ENCODE measurements at regions of chr18 and their contacts with region 1.

Region 1: DNA sequence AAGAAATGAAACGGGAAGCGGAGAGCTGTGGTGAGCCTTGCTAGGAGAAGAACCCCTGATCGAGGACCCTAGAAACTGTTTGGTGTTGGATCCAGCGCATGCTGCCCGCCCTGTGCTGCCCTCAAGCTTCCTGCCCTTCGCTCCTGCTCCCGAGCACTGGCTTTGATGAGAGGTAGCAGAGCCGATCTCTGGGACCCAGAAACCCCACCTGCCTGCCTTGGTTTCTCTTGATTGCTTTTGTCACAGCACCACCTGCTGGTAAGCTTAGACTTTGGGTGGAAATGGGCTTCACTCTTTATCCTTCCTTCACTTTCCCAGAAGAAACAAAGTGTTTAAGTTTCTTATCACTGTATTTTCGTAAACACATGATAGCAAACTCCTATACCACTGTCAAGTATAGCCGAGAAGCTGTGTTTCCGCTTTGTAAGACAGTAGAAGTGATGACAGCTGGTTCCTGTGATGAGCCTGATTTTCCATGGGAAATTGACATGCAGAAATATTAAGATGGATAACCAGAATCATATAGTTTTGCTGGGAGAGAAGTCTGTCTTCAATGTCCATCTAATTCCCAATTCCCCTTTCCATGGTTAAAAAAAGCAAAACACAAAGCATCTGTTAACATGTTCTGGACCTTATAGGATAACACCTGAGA is 267.4 kb downstream of the PHLPP1 start:
- DNase-seq: no peak
- H3K4me3 ChIP-seq: peak overlapping the region; percentile 12; the same call in 1 of the 2 replicates
- CTCF ChIP-seq: peak; percentile 67

Region 2: DNA sequence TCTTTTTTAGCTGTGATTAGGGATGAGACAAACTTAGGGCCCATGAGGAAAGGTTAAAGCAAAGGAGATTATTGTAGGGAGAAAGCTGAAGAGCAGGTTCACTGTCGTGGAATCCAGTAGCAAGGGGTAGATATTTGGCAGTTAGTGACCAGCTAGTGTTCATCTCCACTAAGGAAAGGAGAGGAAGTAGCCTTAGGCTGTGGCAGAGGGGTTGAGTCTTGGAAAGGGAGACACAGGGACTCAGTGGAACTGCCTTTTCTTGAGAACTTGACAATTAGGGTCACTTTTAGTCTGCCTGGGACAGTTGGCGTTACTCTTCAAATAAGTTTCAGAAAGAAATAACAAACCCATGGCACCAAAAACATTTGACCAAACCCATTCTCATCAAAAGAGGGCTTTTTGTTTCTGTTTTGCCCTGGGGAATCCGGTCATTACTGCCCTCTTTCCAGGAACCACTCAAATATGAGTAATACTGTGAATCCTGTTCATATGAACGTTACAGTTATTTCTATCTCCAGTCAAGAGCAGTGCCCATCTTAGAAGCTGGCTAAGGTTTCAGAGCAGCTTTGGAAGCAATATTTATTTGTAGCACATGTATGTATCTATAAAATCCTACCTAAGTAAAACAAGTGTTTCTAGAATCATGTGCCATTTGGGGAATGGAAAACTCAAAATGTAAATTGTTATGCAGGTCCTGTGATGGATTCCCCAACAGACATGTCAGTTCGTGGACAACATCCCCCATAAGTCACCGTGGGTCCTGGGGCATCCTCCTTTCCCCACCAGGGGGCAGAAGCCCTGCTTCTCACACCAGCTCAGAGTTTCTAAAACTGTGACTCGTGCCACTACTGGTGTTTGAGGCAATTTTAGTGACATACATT is 344.7 kb before region 1 on chr18:
- CTCF ChIA-PET with region 1: interaction called, 10 read pairs
- POLR2A ChIA-PET with region 1: no interaction called
- DNase-seq: no peak
- H3K4me3 ChIP-seq: no peak overlapping the region
- CTCF ChIP-seq: peak; percentile 29

Region 3: GRCh38 chr18:62714671-62715435 is 267.9 kb before region 1 on chr18:
- CTCF ChIA-PET with region 1: interaction called, 29 read pairs
- POLR2A ChIA-PET with region 1: no interaction called
- DNase-seq: peak; percentile 99
- H3K4me3 ChIP-seq: peak overlapping the region; percentile 76
- CTCF ChIP-seq: peak; percentile 76

Region 4: DNA sequence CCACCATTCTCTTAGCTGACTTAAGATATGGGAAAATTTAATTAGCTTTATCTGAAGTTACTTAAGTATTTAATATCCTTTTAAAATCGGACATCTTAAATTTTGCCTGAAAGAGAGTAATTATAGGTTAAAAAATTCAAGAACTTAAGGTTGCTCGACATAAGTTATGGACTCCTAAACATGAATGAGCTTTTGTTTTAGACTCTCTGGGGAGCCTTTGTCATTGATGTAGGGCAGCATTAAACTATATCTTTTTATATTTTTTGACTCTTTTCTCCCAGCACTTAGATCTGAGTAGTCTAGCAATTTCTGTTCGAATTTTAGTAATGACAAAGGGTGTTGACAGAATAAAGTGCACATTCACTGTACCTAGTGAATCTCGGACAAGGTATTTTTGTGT is 262.7 kb before region 1 on chr18:
- CTCF ChIA-PET with region 1: interaction called, 29 read pairs
- POLR2A ChIA-PET with region 1: no interaction called
- DNase-seq: no peak
- H3K4me3 ChIP-seq: no peak overlapping the region
- CTCF ChIP-seq: no peak

Region 5: DNA sequence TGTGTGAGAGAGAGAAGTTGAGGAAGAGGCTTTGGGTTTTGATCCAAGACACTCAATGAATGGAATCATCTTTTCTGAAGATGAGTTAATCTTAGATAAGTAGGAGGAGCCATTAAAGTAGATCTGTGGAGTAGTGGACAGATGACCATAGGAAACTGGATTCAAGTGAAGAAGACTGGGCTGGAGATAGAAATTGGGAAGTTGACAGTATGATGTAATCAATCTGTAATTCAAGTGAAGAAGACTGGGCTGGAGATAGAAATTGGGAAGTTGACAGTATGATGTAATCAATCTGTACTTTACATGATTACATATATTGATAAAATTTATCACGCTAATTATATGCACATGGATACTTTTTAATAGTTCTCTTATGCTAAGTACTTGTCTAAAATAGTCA is 174.6 kb before region 1 on chr18:
- CTCF ChIA-PET with region 1: no interaction called
- POLR2A ChIA-PET with region 1: no interaction called
- DNase-seq: no peak
- H3K4me3 ChIP-seq: no peak overlapping the region
- CTCF ChIP-seq: no peak

Region 6: GRCh38 chr18:62957885-62958472 is 24.7 kb before region 1 on chr18:
- CTCF ChIA-PET with region 1: interaction called, 59 read pairs
- POLR2A ChIA-PET with region 1: no interaction called
- DNase-seq: no peak
- H3K4me3 ChIP-seq: no peak overlapping the region
- CTCF ChIP-seq: peak; percentile 13

Region 7: DNA sequence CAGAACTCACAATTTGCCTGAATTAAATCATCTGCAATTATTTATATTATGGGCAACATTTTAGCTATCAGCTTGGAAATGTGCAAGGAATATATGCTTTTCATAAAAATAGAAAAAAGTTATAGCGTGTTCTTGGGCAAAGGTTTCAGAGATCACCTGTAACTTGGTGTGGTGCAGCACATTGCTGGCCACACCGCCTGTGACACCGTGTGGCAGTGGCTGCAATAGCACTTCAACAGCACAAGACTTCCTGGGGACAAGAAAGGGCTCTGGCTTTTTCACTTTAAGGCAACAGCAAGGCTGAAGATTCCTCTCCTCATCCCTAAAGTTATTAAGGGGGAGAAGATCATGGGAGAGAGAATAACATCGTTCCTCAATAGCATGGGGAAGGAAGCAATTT is 693.8 kb after region 1 on chr18:
- CTCF ChIA-PET with region 1: no interaction called
- POLR2A ChIA-PET with region 1: no interaction called
- DNase-seq: no peak
- H3K4me3 ChIP-seq: no peak overlapping the region
- CTCF ChIP-seq: peak; percentile 17

Measured in AG04449 (cell line).